Right ventricle myocardium inferior (tissue), 1 donor: ENCODE measurements at regions of chr6 and their contacts with region 1.

Region 1: GRCh38 chr6:31139599-31139998 is 733 bp upstream of the PSORS1C2 start:
- DNase-seq: no peak
- ATAC-seq: no peak

Region 2: GRCh38 chr6:31366693-31367470 is 227.3 kb after region 1 on chr6:
- intact Hi-C with region 1: loop called (anchors 1 kb)
- DNase-seq: peak; percentile 93
- ATAC-seq: peak; percentile 99